Right cardiac atrium (tissue), 5 donors: ENCODE measurements at regions of chrX and their contacts with region 1.

Region 1: DNA sequence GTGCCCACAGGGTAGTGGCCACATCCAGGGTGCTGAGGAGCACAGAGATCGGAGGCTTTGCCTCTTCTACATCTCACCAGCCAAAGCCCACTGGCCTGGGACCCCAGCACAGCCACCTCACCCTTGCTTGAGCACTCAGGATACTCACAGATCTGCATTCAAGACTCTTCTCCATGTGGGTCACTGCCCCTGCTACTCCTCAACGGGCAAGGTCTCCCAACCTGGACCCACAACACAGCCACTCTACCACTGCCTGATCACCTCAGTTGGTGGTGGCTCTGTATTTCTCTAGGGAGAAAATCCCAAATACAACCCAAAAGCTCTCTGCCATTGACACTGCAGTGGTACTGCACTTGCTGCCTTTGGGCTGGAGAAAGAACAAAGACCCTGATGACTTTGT is 190.3 kb upstream of the KLHL4 start:
- DNase-seq: no peak
- ATAC-seq: no peak
- H3K4me3 ChIP-seq: no peak overlapping the region
- H3K27ac ChIP-seq: no peak overlapping the region
- H3K4me1 ChIP-seq: no peaks in the 10 kb centered on the region
- H3K27me3 ChIP-seq: no peaks in the 10 kb centered on the region

Region 2: DNA sequence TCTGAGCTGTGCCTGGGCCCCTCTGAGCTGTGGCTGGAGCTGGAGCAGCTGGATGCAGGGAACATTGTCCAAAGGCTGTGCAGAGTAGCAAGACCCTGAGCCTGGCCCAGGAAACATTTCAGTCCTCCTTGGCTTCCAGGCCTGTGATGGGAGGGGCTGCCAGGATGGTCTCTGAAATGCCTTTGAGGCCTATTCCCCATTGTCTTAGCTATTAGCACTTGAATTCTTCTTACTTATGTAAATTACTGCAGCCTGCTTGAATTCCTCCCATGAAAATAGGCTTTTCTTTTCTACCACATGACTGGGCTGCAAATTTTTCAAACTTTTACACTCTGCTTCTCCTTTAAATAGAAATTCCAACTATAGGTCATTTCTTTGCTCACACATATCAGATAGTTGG is 159.4 kb before region 1 on chrX:
- intact Hi-C with region 1: no loop called
- DNase-seq: no peak
- ATAC-seq: no peak
- H3K4me3 ChIP-seq: no peak overlapping the region
- H3K27ac ChIP-seq: no peak overlapping the region
- H3K4me1 ChIP-seq: no peaks in the 10 kb centered on the region
- H3K27me3 ChIP-seq: no peaks in the 10 kb centered on the region

Region 3: DNA sequence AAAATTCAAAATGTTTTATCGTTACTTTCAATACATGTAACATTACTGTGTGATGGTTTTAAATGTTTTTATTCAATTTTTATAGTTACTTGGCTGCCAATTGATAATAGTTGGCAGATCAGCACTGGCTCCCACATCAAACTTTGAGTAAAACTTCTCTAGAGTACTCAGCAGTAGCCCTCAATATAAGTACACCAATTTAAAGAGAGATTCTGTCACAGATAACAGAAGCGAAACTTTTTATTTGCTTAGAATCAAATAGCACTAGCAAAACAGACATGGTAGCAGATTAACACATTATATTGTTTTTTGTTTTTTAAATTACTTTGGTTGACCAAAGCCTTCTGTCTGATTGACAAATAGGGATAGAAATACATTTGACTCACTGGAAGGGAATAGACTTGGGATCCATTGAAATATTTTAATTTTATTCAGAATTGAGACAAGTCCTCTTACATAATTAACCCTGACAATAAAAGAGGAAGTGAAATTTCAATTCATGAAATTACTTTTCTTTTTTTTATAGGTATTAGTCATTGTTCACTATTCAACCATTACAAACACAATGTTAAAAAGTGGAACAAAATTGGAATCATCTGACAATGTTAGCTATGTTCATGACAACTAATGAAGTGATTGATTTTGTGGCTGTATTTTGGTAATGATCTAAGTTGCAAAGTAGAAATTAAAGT is 745.2 kb after region 1 on chrX:
- intact Hi-C with region 1: loop called in 1 of 4 experiments (anchors 5 kb)
- DNase-seq: no peak
- ATAC-seq: no peak
- H3K4me3 ChIP-seq: no peak overlapping the region
- H3K27ac ChIP-seq: no peak overlapping the region
- H3K4me1 ChIP-seq: no peaks in the 10 kb centered on the region
- H3K27me3 ChIP-seq: no peaks in the 10 kb centered on the region